CD4-positive, alpha-beta T cell (primary cell): ENCODE measurements at regions of chr11 and their contacts with region 1.

Region 1: DNA sequence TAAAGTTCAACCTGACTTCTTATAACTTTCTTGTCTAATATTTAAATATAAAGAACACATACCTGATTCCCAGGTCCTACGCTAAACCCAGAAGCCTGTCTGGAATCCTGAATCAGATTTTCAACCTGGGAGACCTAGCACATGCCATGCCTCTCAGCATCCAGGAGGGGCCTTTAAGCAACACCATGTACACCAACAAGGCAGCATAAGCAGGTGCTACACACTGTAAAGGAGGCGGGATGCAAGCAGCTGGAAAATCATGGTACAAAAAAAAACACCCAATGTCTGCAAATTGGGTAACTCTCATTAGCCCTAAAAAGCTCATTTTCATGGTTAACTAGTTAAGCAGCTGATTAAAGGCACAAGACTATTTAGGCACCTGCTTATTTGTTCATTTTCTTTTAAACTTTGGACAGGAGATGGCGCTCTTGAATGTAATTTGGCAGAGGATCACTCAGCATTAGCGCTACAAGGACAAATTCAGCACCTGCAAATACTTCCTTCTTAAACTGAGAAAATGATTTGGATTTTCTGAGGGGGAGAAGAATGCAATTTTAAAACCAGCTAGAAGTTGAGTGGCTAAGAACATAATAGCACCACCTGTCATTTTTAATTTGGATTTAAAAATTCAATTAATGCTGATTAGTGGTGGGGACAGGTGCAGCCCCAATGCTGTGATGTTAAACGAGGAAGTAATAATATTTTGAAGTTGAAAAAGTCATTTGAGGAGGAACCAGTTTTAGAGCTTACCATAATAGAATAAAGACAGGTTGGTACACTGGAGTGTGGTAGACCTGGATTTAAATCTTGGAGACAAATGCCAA is 104.0 kb downstream of the FAR1 start:
- DNase-seq: peak in 6 of 14 experiments; percentile 4 to 86 (median 66)
- ATAC-seq: peak; percentile 70
- H3K4me3 ChIP-seq: no peak overlapping the region
- H3K4me3 Mint-ChIP-seq: no peak overlapping the region
- H3K27ac ChIP-seq: no peak overlapping the region
- H3K27ac Mint-ChIP-seq: no peak overlapping the region
- H3K4me1 ChIP-seq: no peaks in the 10 kb centered on the region
- H3K4me1 Mint-ChIP-seq: no peaks in the 10 kb centered on the region
- H3K27me3 ChIP-seq: no peaks in the 10 kb centered on the region
- H3K27me3 Mint-ChIP-seq: no peaks in the 10 kb centered on the region
- CTCF ChIP-seq: peak; percentile 77

Region 2: DNA sequence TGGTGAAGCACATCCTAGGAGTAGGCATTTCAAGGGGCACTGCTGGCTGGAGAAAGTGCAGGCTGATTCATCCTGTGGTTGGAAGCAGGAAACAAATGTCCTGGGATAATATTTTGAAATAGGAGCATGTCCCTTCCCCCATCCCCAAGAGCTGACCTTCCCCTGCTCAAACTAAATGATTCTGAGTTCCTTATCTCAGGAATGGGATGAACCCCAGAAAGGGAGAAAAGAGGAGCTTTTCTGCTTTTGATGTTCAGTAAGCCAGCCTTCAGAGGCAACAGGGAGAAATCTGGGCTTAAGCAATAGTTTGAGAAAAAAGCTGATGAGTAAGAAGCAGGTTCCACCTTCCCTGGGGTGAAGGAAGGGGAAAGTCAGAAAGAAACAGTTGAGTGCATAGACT is 170.5 kb after region 1 on chr11:
- CTCF ChIA-PET with region 1: interaction called, 3 read pairs
- POLR2A ChIA-PET with region 1: interaction called, 3 read pairs
- intact Hi-C with region 1: loop called in 1 of 2 experiments (anchors 5 kb)
- DNase-seq: no peak
- ATAC-seq: no peak
- H3K4me3 ChIP-seq: no peak overlapping the region
- H3K4me3 Mint-ChIP-seq: no peak overlapping the region
- H3K27ac ChIP-seq: no peak overlapping the region
- H3K27ac Mint-ChIP-seq: no peak overlapping the region
- H3K4me1 ChIP-seq: peaks cover 56% of the 10 kb centered on the region
- H3K4me1 Mint-ChIP-seq: peaks cover 71% of the 10 kb centered on the region
- H3K27me3 ChIP-seq: no peaks in the 10 kb centered on the region
- H3K27me3 Mint-ChIP-seq: no peaks in the 10 kb centered on the region
- CTCF ChIP-seq: no peak

Region 3: DNA sequence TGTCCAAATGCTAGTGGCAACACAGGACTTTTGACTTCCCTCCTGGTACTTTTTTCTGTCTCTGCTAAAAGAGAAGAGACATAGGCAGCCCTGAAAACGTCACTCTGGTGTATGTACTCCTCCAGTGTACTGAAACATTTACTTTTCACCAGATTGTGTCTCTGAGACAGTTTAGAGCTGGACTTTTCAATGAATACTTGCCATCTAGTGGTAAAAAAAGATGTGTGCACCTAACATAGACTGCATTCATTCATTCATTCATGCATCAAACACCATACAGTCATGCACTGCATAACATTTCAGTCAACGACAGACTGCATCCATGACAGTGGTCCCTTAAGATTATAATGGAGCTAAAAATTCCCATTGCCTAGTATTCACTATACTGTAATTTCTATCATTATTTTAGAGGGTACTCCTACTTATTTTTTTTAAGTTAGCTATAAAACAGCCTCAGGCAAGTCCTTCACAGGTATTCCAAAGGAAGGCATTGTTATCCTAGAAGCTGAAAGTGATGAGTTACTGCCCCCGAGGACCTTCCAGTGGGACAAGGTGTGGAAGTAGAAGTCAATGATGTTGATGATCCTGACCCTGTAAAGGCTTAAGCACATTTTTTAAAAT is 376.3 kb after region 1 on chr11:
- CTCF ChIA-PET with region 1: interaction called, 19 read pairs
- POLR2A ChIA-PET with region 1: interaction called, 7 read pairs
- intact Hi-C with region 1: loop called (anchors 1 kb)
- DNase-seq: peak in 3 of 14 experiments; percentile 56 to 64 (median 63)
- ATAC-seq: peak; percentile 97
- H3K4me3 ChIP-seq: no peak overlapping the region
- H3K4me3 Mint-ChIP-seq: no peak overlapping the region
- H3K27ac ChIP-seq: no peak overlapping the region
- H3K27ac Mint-ChIP-seq: no peak overlapping the region
- H3K4me1 ChIP-seq: no peaks in the 10 kb centered on the region
- H3K4me1 Mint-ChIP-seq: peaks cover 5% of the 10 kb centered on the region
- H3K27me3 ChIP-seq: no peaks in the 10 kb centered on the region
- H3K27me3 Mint-ChIP-seq: no peaks in the 10 kb centered on the region
- CTCF ChIP-seq: peak; percentile 68

Region 4: GRCh38 chr11:14454861-14455632 is 682.6 kb after region 1 on chr11:
- CTCF ChIA-PET with region 1: interaction called, 3 read pairs
- POLR2A ChIA-PET with region 1: no interaction called
- intact Hi-C with region 1: loop called (anchors 2 kb)
- DNase-seq: peak in 3 of 14 experiments; percentile 31 to 56 (median 55)
- ATAC-seq: peak; percentile 52
- H3K4me3 ChIP-seq: no peak overlapping the region
- H3K4me3 Mint-ChIP-seq: no peak overlapping the region
- H3K27ac ChIP-seq: no peak overlapping the region
- H3K27ac Mint-ChIP-seq: no peak overlapping the region
- H3K4me1 ChIP-seq: no peaks in the 10 kb centered on the region
- H3K4me1 Mint-ChIP-seq: no peaks in the 10 kb centered on the region
- H3K27me3 ChIP-seq: no peaks in the 10 kb centered on the region
- H3K27me3 Mint-ChIP-seq: no peaks in the 10 kb centered on the region
- CTCF ChIP-seq: peak; percentile 77

Region 5: DNA sequence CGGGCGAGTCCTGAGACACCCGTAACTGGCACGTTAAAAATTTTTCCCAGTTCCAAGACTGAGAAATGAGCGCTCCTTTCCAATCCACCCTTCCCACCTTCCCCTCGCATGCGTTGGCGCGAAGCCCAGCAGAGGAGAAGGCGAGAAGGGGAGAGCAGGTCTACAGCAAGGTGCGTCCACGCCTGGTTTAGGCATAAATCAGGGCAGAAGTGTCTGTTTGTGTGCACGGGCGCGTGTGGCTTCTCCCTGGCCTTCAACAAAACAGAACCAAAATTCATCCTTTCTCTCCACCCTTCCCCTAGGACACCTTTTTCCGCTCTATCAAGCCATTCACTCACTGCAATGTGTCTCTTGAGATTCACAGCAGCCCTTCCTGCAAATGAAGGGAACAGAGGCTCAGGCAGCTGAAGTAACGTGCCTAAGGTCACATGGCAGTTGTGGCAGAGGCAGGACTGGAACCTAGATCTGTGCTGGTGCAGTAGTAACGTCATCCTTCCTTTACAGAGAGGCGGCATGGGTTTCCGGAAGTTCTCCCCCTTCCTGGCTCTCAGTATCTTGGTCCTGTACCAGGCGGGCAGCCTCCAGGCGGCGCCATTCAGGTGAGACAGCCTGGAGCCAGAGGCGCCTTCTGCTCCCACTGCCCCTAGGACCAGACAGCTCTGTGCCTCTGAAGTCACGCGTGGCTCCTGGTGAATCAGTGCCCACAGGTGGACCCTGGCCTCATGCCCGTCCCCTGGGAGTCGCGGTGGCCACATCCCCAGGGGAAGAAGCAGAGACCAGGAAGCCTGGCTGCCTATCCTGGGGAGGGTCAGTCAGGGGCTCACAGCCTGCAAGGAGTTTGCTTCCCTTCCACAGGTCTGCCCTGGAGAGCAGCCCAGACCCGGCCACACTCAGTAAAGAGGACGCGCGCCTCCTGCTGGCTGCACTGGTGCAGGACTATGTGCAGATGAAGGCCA is 1302.0 kb after region 1 on chr11:
- CTCF ChIA-PET with region 1: no interaction called
- POLR2A ChIA-PET with region 1: no interaction called
- intact Hi-C with region 1: loop called in 1 of 2 experiments (anchors 5 kb)
- DNase-seq: peak; percentile 71 to 88 (median 78)
- ATAC-seq: peak; percentile 93
- H3K4me3 ChIP-seq: peak overlapping the region; percentile 50
- H3K4me3 Mint-ChIP-seq: peak overlapping the region; percentile 88
- H3K27ac ChIP-seq: no peak overlapping the region
- H3K27ac Mint-ChIP-seq: no peak overlapping the region
- H3K4me1 ChIP-seq: peaks cover 25% of the 10 kb centered on the region
- H3K4me1 Mint-ChIP-seq: peaks cover 18% of the 10 kb centered on the region
- H3K27me3 ChIP-seq: peaks cover 22 to 23% of the 10 kb centered on the region in 2 experiments
- H3K27me3 Mint-ChIP-seq: peaks cover 39% of the 10 kb centered on the region
- CTCF ChIP-seq: peak; percentile 93